SK-N-SH (cell line): ENCODE measurements at regions of chr20 and their contacts with region 1.

Region 1: GRCh38 chr20:62388839-62389600 is 2.1 kb downstream of the RPS21 start:
- DNase-seq: no peak
- H3K4me3 ChIP-seq: peak overlapping the region in 1 of 2 experiments; percentile 72; a peak in 1 of 4 replicates
- H3K27ac ChIP-seq: peak overlapping the region; percentile 0 to 23; a peak in 2 of 4 replicates
- H3K4me1 ChIP-seq: peaks cover 0 to 19% of the 10 kb centered on the region in 2 experiments; a peak in 2 of 4 replicates
- H3K27me3 ChIP-seq: no peaks in the 10 kb centered on the region
- CTCF ChIP-seq: peak; percentile 22; the same call in 1 of the 2 replicates
- EP300 ChIP-seq: no peak
- RAD21 ChIP-seq: no peak

Region 2: DNA sequence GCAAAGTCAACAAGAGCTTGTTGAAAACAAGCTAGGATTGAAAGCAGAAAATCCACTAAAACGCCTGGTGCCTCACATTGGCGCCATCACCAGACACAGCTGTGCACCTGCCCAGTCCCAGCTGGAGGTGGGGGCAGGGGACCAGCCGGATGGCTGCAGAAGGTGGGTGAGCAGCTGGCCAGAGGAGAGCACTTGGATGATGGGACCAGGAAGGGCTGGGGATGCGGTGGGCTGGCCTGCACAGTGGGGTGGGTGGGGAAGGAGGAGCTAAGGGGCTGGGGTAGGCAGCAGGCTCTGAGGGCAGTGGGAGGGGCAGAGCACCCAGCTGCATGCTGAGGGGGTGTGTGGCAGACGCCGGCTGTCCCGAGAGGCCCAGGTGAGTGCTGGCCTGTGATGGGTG is 11.0 kb after region 1 on chr20:
- CTCF ChIA-PET with region 1: interaction called, 5 read pairs
- POLR2A ChIA-PET with region 1: interaction called, 12 read pairs
- DNase-seq: no peak
- H3K4me3 ChIP-seq: no peak overlapping the region
- H3K27ac ChIP-seq: no peak overlapping the region
- H3K4me1 ChIP-seq: peaks cover 0 to 21% of the 10 kb centered on the region in 2 experiments; a peak in 1 of 4 replicates
- H3K27me3 ChIP-seq: no peaks in the 10 kb centered on the region
- CTCF ChIP-seq: no peak
- EP300 ChIP-seq: no peak
- RAD21 ChIP-seq: no peak